ENCODE measurements at regions of chr9 and their contacts with region 1.

Region 1: DNA sequence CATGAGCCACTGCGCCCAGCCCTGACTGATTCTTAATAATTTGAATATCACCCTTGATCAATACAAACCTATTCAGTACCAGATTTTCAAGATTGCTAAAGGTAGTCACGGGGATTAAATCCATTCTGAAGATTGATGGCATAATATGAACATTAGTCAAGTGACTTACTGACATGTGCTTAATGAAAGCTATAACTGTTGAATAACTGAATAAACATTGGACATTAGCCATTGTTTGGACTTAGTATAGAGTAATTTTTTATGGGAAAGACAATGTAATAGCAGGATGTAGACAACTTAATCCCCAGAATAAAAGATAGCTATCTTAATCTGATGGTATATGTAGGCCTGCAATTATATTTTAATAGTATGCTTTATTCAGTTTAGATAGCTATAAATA is 35.0 kb upstream of the VPS13A start:
- DNase-seq: no peak
- H3K4me3 ChIP-seq: no peak overlapping the region
- H3K27ac ChIP-seq: no peak overlapping the region
- H3K4me1 ChIP-seq: no peaks in the 10 kb centered on the region
- H3K27me3 ChIP-seq: peaks cover 14% of the 10 kb centered on the region; the same call in 1 of the 2 replicates
- CTCF ChIP-seq: no peak

Region 2: DNA sequence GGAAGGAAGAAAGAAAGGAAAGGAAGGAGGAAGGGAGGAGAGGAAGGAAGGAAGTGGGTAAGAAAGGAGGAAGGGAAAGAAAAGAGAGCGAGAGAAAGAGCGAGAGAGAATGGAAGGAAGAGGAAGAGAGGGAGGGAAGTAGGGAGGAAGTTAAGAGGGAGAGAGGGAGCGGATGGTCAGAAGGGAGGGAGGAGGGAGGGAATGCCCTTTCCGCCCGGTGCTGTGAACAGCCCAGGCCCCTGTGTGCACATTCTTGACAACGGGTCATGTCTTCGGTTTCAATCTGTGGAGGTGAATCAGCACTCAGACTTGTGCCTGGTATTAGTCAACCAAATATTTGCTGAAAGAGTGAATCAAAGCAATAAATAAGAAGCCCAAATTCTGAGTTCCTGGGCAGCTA is 275.7 kb before region 1 on chr9:
- CTCF ChIA-PET with region 1: no interaction called
- POLR2A ChIA-PET with region 1: no interaction called
- intact Hi-C with region 1: no loop called
- DNase-seq: peak; percentile 4 to 74
- H3K4me3 ChIP-seq: no peak overlapping the region
- H3K27ac ChIP-seq: no peak overlapping the region
- H3K4me1 ChIP-seq: no peaks in the 10 kb centered on the region; the same call in 1 of the 2 replicates
- H3K27me3 ChIP-seq: peaks cover 14% of the 10 kb centered on the region; the same call in 1 of the 2 replicates
- CTCF ChIP-seq: no peak

Region 3: DNA sequence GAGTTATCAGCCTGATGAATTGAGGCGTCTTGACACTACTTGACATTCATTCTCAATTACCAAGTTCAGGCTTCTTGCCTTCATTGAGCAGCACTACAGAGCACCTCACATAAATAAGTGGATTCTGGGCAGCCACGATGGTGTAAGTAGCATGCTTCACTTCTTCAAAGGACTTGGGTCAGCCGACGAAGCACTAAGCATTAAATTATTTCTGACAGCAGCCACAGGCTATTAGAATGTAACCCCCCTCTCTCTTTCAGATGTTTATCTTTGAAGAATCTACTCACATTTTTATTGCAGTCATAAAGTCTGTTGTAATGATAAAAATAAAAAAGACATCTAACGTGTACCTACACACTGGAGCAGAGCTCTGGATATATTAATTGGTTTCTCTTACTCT is 11.0 kb before region 1 on chr9:
- CTCF ChIA-PET with region 1: interaction called, 10 read pairs
- POLR2A ChIA-PET with region 1: no interaction called
- intact Hi-C with region 1: no loop called
- DNase-seq: no peak
- H3K4me3 ChIP-seq: no peak overlapping the region
- H3K27ac ChIP-seq: no peak overlapping the region
- H3K4me1 ChIP-seq: no peaks in the 10 kb centered on the region
- H3K27me3 ChIP-seq: peaks cover 24% of the 10 kb centered on the region; the same call in 1 of the 2 replicates
- CTCF ChIP-seq: no peak

Measured in PC-9 (cell line).